OCI-LY7 (cell line): ENCODE measurements at regions of chr10 and their contacts with region 1.

Region 1: DNA sequence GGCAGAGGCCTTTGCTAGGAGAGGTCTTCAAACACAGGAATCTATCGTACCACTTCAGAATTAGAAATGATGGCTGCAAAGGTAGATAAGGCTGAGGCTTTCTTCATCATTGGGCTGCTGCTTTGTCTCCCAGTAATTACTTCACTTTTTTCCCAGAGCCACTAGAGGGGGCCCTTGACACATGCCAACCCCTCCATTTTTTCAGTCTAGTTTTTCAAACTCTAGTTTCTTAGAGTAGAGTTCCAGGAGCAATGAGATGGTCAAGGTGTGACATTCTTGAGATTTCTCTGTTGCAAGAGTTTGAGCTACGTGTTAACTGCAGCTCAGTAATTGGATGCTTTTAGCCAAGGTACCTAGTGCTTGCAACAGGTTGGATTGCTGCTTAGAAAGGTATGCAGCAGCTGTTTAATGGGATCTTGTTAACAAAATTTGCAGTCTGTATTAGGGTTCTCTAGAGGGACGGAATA is 33.8 kb upstream of the RBM20 start:
- DNase-seq: peak; percentile 76
- H3K4me3 ChIP-seq: no peak overlapping the region
- H3K27ac ChIP-seq: no peak overlapping the region
- H3K4me1 ChIP-seq: peaks cover 29% of the 10 kb centered on the region
- CTCF ChIP-seq: peak; percentile 98

Region 2: DNA sequence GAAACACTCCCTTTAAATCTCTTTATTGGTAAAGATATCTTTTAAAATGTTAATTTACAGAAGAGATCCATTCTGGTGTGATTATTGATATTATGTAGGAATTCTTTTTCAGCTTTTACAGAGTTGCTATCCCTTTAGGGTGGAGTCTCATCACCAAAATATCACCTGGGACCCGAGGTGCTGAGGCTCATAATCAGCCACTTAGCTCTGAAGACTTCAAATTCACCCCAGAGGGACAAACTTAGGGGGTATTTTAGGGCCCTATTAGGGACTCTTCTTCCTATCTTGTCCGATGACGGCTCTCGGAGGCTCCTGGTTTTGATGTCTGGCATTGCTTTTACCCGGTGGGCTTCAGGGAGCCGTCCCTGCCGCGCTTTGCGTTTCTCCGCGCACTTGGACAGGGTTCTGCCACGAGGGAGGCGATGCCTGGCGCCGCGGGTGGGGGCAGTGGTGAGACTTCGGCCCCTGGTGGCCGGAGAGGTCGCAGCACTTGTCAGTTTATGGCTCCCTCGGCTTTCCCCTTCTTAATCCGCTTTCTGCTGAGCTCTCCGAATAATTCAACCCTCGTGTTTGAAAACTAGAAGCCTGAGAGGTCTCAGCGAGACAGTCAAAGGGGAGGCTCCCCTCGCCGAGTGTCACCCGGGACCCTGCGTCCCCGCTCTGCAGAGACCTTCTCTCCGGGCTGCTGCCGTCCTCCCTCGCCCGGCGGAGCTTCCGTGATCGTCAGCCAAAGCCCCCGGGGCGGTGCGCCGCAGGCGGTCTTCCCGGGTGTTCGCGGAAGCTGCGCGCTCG is 61.6 kb after region 1 on chr10:
- CTCF ChIA-PET with region 1: interaction called, 10 read pairs
- POLR2A ChIA-PET with region 1: interaction called, 6 read pairs
- intact Hi-C with region 1: loop called (anchors 2 kb)
- DNase-seq: peak; percentile 90
- H3K4me3 ChIP-seq: peak overlapping the region; percentile 71
- H3K27ac ChIP-seq: peak overlapping the region; percentile 73
- H3K4me1 ChIP-seq: peaks cover 19% of the 10 kb centered on the region
- CTCF ChIP-seq: peak; percentile 98

Region 3: DNA sequence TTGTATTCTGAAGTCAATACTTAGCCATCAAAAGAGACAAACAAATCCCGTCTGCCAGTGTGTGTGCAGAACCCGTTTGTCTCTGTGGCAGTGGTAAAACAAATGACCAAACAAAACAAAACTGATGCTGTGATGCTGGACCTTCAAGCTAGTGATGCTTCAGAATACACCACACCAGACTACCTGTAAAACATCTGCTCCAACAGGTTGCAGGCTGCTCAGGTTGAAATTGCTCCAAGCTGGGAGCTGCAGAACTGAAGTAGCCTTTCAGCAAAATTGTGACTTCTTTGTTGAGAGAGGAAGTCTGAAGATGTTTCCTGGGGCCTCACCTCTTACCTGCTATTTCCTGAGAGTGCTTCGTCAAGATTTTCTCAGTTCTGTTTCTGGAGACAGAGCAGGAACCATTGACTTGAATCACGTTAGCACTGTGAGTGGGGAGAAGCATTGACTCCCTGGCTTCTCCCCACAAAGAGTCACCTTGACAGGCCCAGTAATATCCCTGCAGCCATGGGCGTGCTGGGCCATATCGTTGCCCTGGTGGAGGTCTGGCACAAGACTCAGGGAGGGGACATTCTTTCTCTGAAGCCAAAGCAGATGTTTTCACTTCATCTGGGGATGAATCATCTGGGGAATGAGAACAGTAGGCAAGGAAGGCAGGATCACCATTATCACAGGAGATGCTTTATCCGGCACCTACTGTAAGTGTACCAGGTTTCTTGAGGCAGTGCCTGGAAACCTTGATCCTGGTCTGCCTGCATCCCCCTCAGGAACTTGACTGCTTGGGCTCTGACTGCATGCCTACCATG is 114.0 kb after region 1 on chr10:
- CTCF ChIA-PET with region 1: no interaction called
- POLR2A ChIA-PET with region 1: interaction called, 5 read pairs
- intact Hi-C with region 1: loop called (anchors 5 kb)
- DNase-seq: peak; percentile 82
- H3K4me3 ChIP-seq: peak overlapping the region; percentile 61
- H3K27ac ChIP-seq: peak overlapping the region; percentile 92
- H3K4me1 ChIP-seq: peaks cover 57% of the 10 kb centered on the region
- CTCF ChIP-seq: no peak

Region 4: GRCh38 chr10:110843031-110843430 is 232.7 kb after region 1 on chr10:
- CTCF ChIA-PET with region 1: no interaction called
- POLR2A ChIA-PET with region 1: no interaction called
- intact Hi-C with region 1: no loop called
- DNase-seq: peak; percentile 98
- H3K4me3 ChIP-seq: peak overlapping the region; percentile 63
- H3K27ac ChIP-seq: peak overlapping the region; percentile 97
- H3K4me1 ChIP-seq: peaks cover 96% of the 10 kb centered on the region
- CTCF ChIP-seq: no peak

Region 5: DNA sequence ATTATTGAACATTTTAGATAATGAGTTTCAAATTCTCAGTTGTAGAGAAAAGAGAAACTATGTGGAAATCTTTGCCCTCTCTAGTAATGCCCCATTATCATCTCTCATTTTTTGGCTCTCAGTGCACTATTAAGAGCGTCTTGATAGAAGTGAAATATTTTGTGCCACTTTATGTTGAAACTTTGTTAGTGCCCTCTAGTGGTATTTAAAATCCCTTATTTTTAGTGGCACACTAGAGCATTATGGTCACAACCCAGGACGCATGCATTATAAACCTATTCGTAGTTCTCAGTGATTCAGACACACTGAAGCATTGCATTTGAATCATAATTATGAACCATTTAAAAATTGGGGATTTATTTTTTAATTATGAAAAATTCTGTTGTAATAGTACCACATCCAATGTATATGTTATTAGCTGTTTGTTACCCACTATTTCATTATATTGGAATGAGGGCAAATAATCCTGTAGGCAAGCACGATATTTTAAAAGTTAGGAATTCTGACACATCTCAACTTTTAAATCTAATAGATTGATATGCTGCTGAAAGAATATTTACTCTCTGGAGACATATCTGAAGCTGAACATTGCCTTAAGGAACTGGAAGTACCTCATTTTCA is 283.3 kb after region 1 on chr10:
- CTCF ChIA-PET with region 1: no interaction called
- POLR2A ChIA-PET with region 1: no interaction called
- intact Hi-C with region 1: loop called (anchors 5 kb)
- DNase-seq: peak; percentile 85
- H3K4me3 ChIP-seq: no peak overlapping the region
- H3K27ac ChIP-seq: no peak overlapping the region
- H3K4me1 ChIP-seq: peaks cover 4% of the 10 kb centered on the region
- CTCF ChIP-seq: peak; percentile 92